Left lung (tissue), 14 donors: ENCODE measurements at regions of chr1 and their contacts with region 1.

Region 1: GRCh38 chr1:181189691-181190363 is 101.3 kb downstream of the IER5 start:
- DNase-seq: peak in 3 of 4 donors; percentile 49 to 93 (median 72)
- ATAC-seq: peak; percentile 98
- H3K4me3 ChIP-seq: no peak overlapping the region
- H3K27ac ChIP-seq: no peak overlapping the region
- H3K4me1 ChIP-seq: peaks cover 0 to 5% of the 10 kb centered on the region in 2 donors
- H3K27me3 ChIP-seq: peaks cover 0 to 26% of the 10 kb centered on the region in 2 donors
- CTCF ChIP-seq: peak; percentile 91 to 97

Region 2: GRCh38 chr1:181423392-181423837 is 233.6 kb after region 1 on chr1:
- intact Hi-C with region 1: loop called in 1 of 2 experiments (anchors 2 kb)
- DNase-seq: peak in 1 of 4 donors; percentile 19
- ATAC-seq: peak; percentile 69
- H3K4me3 ChIP-seq: no peak overlapping the region
- H3K27ac ChIP-seq: no peak overlapping the region
- H3K4me1 ChIP-seq: no peaks in the 10 kb centered on the region
- H3K27me3 ChIP-seq: peaks cover 6 to 32% of the 10 kb centered on the region in 2 donors
- CTCF ChIP-seq: peak; percentile 13 to 23

Region 3: GRCh38 chr1:181541947-181542346 is 352.1 kb after region 1 on chr1:
- intact Hi-C with region 1: no loop called
- DNase-seq: peak in 1 of 4 donors; percentile 35
- ATAC-seq: peak; percentile 78
- H3K4me3 ChIP-seq: no peak overlapping the region
- H3K27ac ChIP-seq: peak overlapping the region in 1 of 2 donors; percentile 6
- H3K4me1 ChIP-seq: no peaks in the 10 kb centered on the region
- H3K27me3 ChIP-seq: peaks cover 0 to 12% of the 10 kb centered on the region in 2 donors
- CTCF ChIP-seq: no peak

Region 4: DNA sequence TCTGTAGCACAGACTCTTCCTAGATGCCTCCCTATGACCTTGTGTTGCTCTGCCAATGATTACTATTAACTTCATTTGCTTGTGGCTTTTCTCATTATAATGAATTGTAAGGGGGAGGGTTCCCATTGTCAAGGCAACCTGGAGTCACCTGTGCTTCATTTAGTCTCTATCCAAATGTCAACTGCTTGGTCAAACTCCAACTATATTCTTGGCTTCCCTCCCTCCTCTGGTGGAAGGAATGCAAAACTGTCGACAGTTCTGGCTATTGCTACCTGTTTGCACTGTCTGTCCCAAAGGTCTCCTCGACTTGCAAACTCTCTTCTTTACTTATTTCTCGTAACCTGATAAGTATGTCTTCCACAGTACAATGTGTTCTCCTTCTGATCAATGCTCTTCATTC is 393.8 kb after region 1 on chr1:
- intact Hi-C with region 1: no loop called
- DNase-seq: no peak
- ATAC-seq: peak; percentile 41
- H3K4me3 ChIP-seq: no peak overlapping the region
- H3K27ac ChIP-seq: no peak overlapping the region
- H3K4me1 ChIP-seq: no peaks in the 10 kb centered on the region
- H3K27me3 ChIP-seq: no peaks in the 10 kb centered on the region
- CTCF ChIP-seq: no peak